ENCODE measurements at regions of chr6 and their contacts with region 1.

Region 1: GRCh38 chr6:158869826-158870648 is 50.9 kb upstream of the EZR start:
- DNase-seq: peak; percentile 80
- ATAC-seq: peak; percentile 72
- H3K4me3 Mint-ChIP-seq: peak overlapping the region; percentile 85
- H3K27ac Mint-ChIP-seq: peak overlapping the region; percentile 100
- H3K4me1 Mint-ChIP-seq: peaks cover 63% of the 10 kb centered on the region
- H3K27me3 Mint-ChIP-seq: no peaks in the 10 kb centered on the region
- CTCF ChIP-seq: no peak

Region 2: DNA sequence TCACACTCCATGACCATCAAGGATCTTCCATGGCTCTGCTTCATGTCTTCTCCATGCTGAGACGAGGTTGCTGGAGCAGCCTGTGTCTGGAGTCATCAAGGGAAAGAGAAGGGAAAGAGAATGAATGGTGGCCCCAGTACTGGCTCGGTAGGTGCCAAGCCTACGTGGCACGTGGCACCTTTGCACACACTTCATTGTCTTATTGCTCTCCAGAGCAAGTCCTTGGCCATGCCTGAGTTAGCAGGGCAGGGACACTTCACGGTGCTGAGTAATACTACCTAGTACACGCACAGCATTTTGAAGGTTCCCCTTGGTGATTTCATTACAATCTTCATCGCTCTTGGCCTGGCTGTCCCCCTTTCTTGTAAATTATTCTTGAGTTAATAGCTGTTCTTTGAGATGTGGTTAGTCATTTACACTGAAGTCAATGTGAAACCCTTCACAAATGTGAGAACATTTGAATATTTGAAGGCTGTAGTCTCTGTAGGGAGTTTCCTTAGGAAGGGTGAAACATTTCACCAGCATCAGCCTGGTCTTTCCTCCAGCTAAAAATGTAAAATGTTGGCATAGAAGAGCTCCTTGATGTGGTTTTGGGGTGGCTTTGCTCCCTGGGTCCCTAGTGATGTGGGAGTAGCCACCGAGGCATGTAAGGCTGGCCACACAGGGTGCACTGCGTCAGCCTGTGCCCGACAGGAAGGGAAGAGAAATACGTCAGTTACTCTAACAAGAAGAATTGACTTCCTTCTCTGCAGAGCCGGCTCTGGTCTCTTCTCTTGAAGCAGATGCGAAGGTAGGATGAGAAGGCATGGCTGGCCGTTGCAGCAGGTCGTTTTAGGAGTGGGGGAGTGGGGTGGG is 220.5 kb before region 1 on chr6 and contains the start of gene SYTL3:
- CTCF ChIA-PET with region 1: interaction called, 3 read pairs
- POLR2A ChIA-PET with region 1: interaction called, 9 read pairs
- intact Hi-C with region 1: loop called (anchors 2 kb)
- DNase-seq: peak; percentile 57
- ATAC-seq: peak; percentile 72
- H3K4me3 Mint-ChIP-seq: peak within 1 kb of the TSS; percentile 86
- H3K27ac Mint-ChIP-seq: peak within 1 kb of the TSS; percentile 100
- H3K4me1 Mint-ChIP-seq: peaks cover 49% of the 10 kb centered on the region
- H3K27me3 Mint-ChIP-seq: peaks cover 2% of the 10 kb centered on the region
- CTCF ChIP-seq: no peak
- total RNA-seq, gene SYTL3: 5.8 and 6.0 TPM in 2 replicates

Region 3: DNA sequence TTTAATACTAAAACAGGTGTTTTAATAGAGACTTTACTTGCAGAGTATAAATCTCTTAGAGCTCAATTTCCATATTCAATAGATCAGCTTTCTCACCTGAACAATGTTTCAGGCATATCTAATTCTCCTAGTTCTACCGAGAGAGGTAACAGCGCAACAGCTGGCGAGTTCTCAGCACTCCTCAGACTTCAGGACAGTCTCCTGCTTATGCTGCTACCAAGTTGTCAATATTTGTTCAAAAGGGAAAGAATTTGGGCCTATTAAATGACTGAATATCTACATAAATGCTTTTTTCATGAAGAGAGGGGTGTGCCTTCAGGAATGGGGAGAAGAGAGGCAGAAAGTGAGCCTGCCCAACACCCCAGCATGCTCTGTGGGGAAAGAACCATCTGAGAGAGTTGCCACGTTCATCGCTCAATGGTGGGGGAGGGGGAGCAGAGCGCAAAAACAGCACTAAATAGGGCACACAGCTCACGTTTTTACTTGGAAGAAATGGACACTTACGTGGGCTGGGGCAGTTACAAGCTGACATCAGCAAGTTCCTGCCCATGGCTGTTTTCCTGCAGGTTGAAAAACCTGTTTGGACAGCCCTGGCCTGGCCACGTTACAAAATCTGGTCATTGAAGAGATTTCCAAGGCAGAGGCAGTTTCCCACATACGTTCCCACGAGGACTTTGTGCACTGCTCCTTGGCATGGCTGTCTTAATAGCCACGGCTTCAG is 88.9 kb before region 1 on chr6:
- CTCF ChIA-PET with region 1: interaction called, 3 read pairs
- POLR2A ChIA-PET with region 1: interaction called, 10 read pairs
- intact Hi-C with region 1: no loop called
- DNase-seq: no peak
- ATAC-seq: no peak
- H3K4me3 Mint-ChIP-seq: no peak overlapping the region
- H3K27ac Mint-ChIP-seq: peak overlapping the region; percentile 56
- H3K4me1 Mint-ChIP-seq: peaks cover 2% of the 10 kb centered on the region
- H3K27me3 Mint-ChIP-seq: no peaks in the 10 kb centered on the region
- CTCF ChIP-seq: no peak

Region 4: GRCh38 chr6:158808941-158809678 is 60.9 kb before region 1 on chr6:
- CTCF ChIA-PET with region 1: interaction called, 16 read pairs
- POLR2A ChIA-PET with region 1: interaction called, 273 read pairs
- intact Hi-C with region 1: loop called (anchors 2 kb)
- DNase-seq: peak; percentile 40
- ATAC-seq: peak; percentile 80
- H3K4me3 Mint-ChIP-seq: peak overlapping the region; percentile 67
- H3K27ac Mint-ChIP-seq: peak overlapping the region; percentile 94
- H3K4me1 Mint-ChIP-seq: peaks cover 98% of the 10 kb centered on the region
- H3K27me3 Mint-ChIP-seq: no peaks in the 10 kb centered on the region
- CTCF ChIP-seq: no peak

Region 5: GRCh38 chr6:158843751-158844683 is 26.0 kb before region 1 on chr6:
- CTCF ChIA-PET with region 1: no interaction called
- POLR2A ChIA-PET with region 1: interaction called, 26 read pairs
- intact Hi-C with region 1: no loop called
- DNase-seq: no peak
- ATAC-seq: peak; percentile 79
- H3K4me3 Mint-ChIP-seq: peak overlapping the region; percentile 28
- H3K27ac Mint-ChIP-seq: peak overlapping the region; percentile 76
- H3K4me1 Mint-ChIP-seq: peaks cover 35% of the 10 kb centered on the region
- H3K27me3 Mint-ChIP-seq: no peaks in the 10 kb centered on the region
- CTCF ChIP-seq: no peak

Region 6: GRCh38 chr6:158938811-158939254 is 68.8 kb after region 1 on chr6:
- CTCF ChIA-PET with region 1: no interaction called
- POLR2A ChIA-PET with region 1: interaction called, 22 read pairs
- intact Hi-C with region 1: no loop called
- DNase-seq: no peak
- ATAC-seq: peak; percentile 76
- H3K4me3 Mint-ChIP-seq: peak overlapping the region; percentile 79
- H3K27ac Mint-ChIP-seq: peak overlapping the region; percentile 36
- H3K4me1 Mint-ChIP-seq: peaks cover 24% of the 10 kb centered on the region
- H3K27me3 Mint-ChIP-seq: no peaks in the 10 kb centered on the region
- CTCF ChIP-seq: no peak

Region 7: DNA sequence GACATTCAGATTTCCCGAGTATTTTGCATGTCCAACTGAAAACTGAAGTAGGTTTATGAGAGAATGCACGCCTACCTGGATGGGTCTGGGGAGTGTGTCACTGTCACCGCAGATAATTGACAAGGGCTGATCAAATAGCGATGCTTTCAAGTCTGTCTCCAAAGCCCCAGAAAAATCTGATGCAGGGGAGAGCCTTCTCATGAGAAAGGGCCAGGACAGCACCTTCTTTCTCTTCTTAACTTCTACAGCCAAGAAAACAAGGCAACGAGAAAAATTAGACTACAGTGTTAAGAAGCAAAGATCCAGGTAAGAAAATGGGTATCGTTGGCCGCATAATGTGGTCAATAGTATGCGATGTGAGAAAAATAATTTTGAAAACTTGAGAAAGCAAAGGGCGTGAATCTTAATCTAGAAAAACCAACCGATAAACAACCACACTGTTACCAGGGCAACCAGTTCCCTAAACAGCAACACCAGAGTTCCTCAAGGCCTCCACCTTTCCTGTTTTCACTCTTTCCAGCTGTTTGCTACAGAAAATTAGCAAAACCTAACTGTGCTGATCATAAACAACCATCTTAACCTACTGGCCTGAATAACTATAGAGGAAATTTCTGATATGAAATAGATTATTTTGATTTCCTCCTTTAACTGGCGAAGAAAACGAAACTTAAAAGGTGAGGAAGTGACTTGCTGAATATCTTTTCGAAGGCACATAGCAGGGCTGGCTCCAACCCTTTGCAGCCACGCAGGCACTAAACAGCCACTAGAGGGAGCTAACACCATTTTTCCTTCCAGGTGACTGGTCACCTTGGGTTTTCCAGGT is 172.2 kb after region 1 on chr6:
- CTCF ChIA-PET with region 1: no interaction called
- POLR2A ChIA-PET with region 1: interaction called, 7 read pairs
- intact Hi-C with region 1: loop called (anchors 2 kb)
- DNase-seq: no peak
- ATAC-seq: peak; percentile 34
- H3K4me3 Mint-ChIP-seq: peak overlapping the region; percentile 99
- H3K27ac Mint-ChIP-seq: peak overlapping the region; percentile 100
- H3K4me1 Mint-ChIP-seq: peaks cover 76% of the 10 kb centered on the region
- H3K27me3 Mint-ChIP-seq: no peaks in the 10 kb centered on the region
- CTCF ChIP-seq: peak; percentile 91

Region 8: DNA sequence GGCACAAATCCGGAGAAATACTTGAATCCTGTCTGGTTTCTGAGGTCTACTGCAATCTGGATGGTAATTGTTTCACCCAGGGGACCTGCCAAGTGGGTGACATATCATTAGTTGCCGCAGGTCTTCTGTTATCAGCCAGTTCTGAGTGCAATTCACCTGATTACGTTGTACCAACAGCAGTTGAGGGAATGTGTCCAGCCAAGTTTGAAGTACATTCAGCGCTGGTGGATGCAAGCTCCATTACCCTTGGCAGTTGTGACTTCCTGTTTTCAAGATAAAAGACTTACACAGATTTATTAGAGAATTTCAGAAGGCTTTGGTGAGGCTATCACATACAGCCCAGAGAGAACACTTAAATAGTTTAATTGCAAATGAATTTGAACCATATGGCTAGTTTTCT is 342.0 kb after region 1 on chr6:
- CTCF ChIA-PET with region 1: no interaction called
- POLR2A ChIA-PET with region 1: no interaction called
- intact Hi-C with region 1: no loop called
- DNase-seq: no peak
- ATAC-seq: no peak
- H3K4me3 Mint-ChIP-seq: no peak overlapping the region
- H3K27ac Mint-ChIP-seq: no peak overlapping the region
- H3K4me1 Mint-ChIP-seq: peaks cover 16% of the 10 kb centered on the region
- H3K27me3 Mint-ChIP-seq: peaks cover 8% of the 10 kb centered on the region
- CTCF ChIP-seq: no peak

Measured in activated B cell treated with CpG ODN at 0.5 μM for 24 hours (primary cell).